ENCODE measurements at regions of chr7 and their contacts with region 1.

Region 1: DNA sequence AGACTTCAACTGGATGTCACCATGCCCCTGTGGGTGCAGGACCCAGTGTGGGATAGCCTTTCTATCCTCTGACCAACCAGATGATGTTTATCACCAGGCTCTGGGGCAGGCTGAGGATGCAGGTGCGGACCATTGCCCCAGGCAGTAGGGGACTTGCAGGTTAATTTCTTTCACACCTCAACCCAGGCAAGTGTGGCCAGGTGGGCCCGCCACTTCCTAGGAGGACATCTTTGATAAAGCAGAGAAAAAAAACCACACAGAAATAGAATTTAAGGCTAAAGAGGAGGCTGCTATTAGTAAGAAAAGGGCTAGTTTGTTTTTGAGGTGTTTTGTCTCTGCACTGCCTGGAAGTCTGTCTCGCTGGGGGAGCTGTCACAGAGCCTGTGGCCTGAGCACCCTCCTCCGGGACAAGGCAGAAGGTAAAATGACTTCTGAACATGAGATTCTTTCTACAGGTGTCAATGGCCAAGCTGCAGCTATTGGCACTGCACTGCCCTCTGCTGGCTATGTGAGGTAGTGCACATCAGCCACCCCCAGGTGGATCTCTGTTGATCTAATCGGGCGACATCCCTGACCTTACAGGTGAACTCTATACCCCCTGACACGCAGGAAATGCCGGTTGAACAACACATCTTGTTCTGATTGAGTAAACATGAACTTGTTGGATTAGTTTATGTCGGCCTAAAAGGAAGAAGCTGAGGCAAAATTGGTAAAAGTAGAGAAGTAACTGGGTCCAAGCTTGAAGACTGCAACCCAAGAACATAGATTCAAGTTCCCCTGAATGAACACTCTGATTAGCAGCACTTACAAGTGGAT is 21.0 kb downstream of the UPP1 start:
- DNase-seq: peak; percentile 81 to 86 (median 84)
- H3K4me3 ChIP-seq: no peak overlapping the region
- H3K4me3 Mint-ChIP-seq: peak overlapping the region in 2 of 8 donors; percentile 2 to 13
- H3K27ac ChIP-seq: no peak overlapping the region
- H3K27ac Mint-ChIP-seq: peak overlapping the region; percentile 57 to 90 (median 85)
- H3K4me1 ChIP-seq: peaks cover 13% of the 10 kb centered on the region
- H3K4me1 Mint-ChIP-seq: peaks cover 8 to 16% (median 11%) of the 10 kb centered on the region in 4 donors
- H3K27me3 ChIP-seq: no peaks in the 10 kb centered on the region
- H3K27me3 Mint-ChIP-seq: no peaks in the 10 kb centered on the region

Region 2: DNA sequence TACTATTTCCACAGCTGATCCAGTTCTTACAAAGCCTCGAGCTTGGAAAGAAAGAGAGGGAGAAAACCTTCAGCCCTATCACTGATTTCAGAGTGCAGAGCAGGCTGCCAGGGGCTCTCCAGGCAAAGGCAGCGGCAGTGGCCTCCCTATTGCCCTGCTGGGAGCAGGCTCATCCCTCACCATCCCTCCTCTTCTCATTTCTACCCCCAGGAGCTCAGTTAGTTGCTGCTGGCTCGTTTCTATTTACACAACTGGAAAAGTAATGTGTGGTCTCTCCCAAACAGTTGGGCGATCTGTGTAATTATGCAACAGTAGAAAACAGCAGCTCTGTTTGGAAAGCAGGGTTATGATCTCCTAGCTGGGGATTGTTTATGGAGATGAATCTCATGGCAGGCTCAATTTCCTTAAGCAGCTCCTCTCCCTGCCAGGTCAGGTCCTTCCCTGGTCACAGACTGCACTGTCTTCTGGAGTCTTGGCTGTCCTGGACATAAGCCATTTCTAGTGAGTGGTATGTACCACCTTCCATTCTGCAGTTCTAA is 499.5 kb before region 1 on chr7:
- CTCF ChIA-PET with region 1: no interaction called
- POLR2A ChIA-PET with region 1: no interaction called
- intact Hi-C with region 1: no loop called
- DNase-seq: no peak
- H3K4me3 ChIP-seq: no peak overlapping the region
- H3K4me3 Mint-ChIP-seq: no peak overlapping the region
- H3K27ac ChIP-seq: no peak overlapping the region
- H3K27ac Mint-ChIP-seq: no peak overlapping the region
- H3K4me1 ChIP-seq: no peaks in the 10 kb centered on the region
- H3K4me1 Mint-ChIP-seq: no peaks in the 10 kb centered on the region
- H3K27me3 ChIP-seq: no peaks in the 10 kb centered on the region
- H3K27me3 Mint-ChIP-seq: peaks cover 0 to 1% of the 10 kb centered on the region in 2 donors

Region 3: GRCh38 chr7:47968847-47969774 is 140.9 kb before region 1 on chr7:
- CTCF ChIA-PET with region 1: interaction called, 12 read pairs
- POLR2A ChIA-PET with region 1: no interaction called
- intact Hi-C with region 1: no loop called
- DNase-seq: peak; percentile 20 to 60 (median 37)
- H3K4me3 ChIP-seq: no peak overlapping the region
- H3K4me3 Mint-ChIP-seq: no peak overlapping the region
- H3K27ac ChIP-seq: no peak overlapping the region
- H3K27ac Mint-ChIP-seq: peak overlapping the region; percentile 8 to 87 (median 67)
- H3K4me1 ChIP-seq: no peaks in the 10 kb centered on the region
- H3K4me1 Mint-ChIP-seq: peaks cover 14 to 27% (median 20%) of the 10 kb centered on the region in 4 donors
- H3K27me3 ChIP-seq: no peaks in the 10 kb centered on the region
- H3K27me3 Mint-ChIP-seq: no peaks in the 10 kb centered on the region

Region 4: DNA sequence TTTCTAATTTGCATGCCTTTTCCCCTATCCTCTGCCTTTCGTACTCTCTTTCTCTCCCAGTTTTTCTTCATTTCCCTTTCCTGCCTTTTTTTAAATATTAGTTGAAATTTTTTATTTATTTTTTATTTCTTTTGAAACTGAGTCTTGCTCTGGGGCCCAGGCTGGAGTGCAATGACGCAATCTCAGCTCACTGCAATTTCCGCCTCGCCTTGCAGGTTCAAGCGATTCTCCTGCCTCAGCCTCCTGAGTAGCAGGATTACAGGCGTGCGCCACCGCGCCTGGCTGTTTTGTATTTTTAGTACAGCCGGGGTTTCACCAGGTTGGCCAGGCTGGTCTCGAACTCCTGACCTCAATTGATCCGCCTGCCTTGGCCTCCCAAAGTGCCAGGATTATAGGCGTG is 110.6 kb before region 1 on chr7:
- CTCF ChIA-PET with region 1: interaction called, 218 read pairs
- POLR2A ChIA-PET with region 1: no interaction called
- intact Hi-C with region 1: no loop called
- DNase-seq: no peak
- H3K4me3 ChIP-seq: no peak overlapping the region
- H3K4me3 Mint-ChIP-seq: no peak overlapping the region
- H3K27ac ChIP-seq: no peak overlapping the region
- H3K27ac Mint-ChIP-seq: no peak overlapping the region
- H3K4me1 ChIP-seq: no peaks in the 10 kb centered on the region
- H3K4me1 Mint-ChIP-seq: peaks cover 0 to 3% (median under 1%) of the 10 kb centered on the region in 4 donors
- H3K27me3 ChIP-seq: no peaks in the 10 kb centered on the region
- H3K27me3 Mint-ChIP-seq: peaks cover 0 to 1% of the 10 kb centered on the region in 2 donors

Region 5: GRCh38 chr7:48088559-48089045 is 21.5 kb before region 1 on chr7:
- CTCF ChIA-PET with region 1: interaction called, 42 read pairs
- POLR2A ChIA-PET with region 1: interaction called, 12 read pairs
- intact Hi-C with region 1: loop called (anchors 1 kb)
- DNase-seq: peak in 1 of 5 donors; percentile 87
- H3K4me3 ChIP-seq: peak overlapping the region; percentile 70 to 88
- H3K4me3 Mint-ChIP-seq: peak overlapping the region; percentile 86 to 97 (median 93)
- H3K27ac ChIP-seq: peak overlapping the region; percentile 76
- H3K27ac Mint-ChIP-seq: peak overlapping the region; percentile 88 to 98 (median 94)
- H3K4me1 ChIP-seq: peaks cover 90% of the 10 kb centered on the region
- H3K4me1 Mint-ChIP-seq: peaks cover 54 to 89% (median 72%) of the 10 kb centered on the region in 4 donors
- H3K27me3 ChIP-seq: no peaks in the 10 kb centered on the region
- H3K27me3 Mint-ChIP-seq: no peaks in the 10 kb centered on the region